ENCODE measurements at regions of chr4 and their contacts with region 1.

Region 1: DNA sequence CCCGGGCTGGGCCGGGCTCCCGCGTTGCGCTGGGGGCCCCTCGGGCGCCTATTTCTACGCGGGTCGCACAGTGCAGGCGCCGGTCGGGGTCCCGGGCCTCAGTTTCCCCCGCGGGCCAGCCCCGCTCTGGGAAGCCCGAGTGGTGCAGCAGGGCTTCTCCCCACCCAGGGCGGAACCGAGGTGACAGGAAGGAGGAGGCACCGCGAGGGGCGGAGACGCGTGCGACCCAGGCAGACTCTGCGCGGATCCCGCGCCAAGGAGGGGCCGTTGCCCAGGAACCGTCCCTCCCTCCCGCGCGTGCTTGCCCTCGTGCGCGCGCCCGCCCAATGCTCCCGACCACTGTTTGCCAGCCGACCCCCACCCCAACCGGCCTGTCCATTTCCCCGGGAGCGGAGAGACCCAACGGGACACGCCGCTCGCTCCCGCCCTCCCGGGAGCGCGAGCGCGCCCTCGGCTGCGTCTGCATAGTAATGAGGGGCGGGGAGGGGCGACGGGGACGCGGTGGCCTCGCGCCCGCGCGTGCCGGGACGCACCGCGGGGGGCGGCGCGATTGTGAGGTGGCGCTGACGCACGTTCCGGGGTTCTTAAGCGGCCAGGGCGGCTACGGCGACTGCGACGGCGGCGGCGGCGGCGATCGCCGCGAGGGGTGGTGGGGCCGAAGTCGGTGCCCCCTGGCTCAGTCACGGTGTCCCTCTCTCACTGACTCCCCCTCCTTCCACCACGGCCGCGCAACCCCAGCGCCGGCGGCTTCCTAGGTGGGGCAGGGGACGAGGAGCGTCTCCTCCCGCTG is at the start of gene CPEB2:
- DNase-seq: peak; percentile 88 to 95 (median 93)
- ATAC-seq: peak; percentile 81
- H3K4me3 ChIP-seq: peak within 1 kb of the TSS; percentile 99
- H3K4me3 Mint-ChIP-seq: peak within 1 kb of the TSS; percentile 86 to 95 (median 93)
- H3K27ac ChIP-seq: peak within 1 kb of the TSS; percentile 100
- H3K27ac Mint-ChIP-seq: peak within 1 kb of the TSS; percentile 90 to 98 (median 97)
- H3K4me1 ChIP-seq: peaks cover 7 to 10% of the 10 kb centered on the region in 2 donors
- H3K4me1 Mint-ChIP-seq: peaks cover 17 to 29% (median 24%) of the 10 kb centered on the region in 7 donors
- H3K27me3 ChIP-seq: no peaks in the 10 kb centered on the region
- H3K27me3 Mint-ChIP-seq: no peaks in the 10 kb centered on the region
- total RNA-seq, gene CPEB2: 11.1 to 21.7 (median 14.9) TPM

Region 2: DNA sequence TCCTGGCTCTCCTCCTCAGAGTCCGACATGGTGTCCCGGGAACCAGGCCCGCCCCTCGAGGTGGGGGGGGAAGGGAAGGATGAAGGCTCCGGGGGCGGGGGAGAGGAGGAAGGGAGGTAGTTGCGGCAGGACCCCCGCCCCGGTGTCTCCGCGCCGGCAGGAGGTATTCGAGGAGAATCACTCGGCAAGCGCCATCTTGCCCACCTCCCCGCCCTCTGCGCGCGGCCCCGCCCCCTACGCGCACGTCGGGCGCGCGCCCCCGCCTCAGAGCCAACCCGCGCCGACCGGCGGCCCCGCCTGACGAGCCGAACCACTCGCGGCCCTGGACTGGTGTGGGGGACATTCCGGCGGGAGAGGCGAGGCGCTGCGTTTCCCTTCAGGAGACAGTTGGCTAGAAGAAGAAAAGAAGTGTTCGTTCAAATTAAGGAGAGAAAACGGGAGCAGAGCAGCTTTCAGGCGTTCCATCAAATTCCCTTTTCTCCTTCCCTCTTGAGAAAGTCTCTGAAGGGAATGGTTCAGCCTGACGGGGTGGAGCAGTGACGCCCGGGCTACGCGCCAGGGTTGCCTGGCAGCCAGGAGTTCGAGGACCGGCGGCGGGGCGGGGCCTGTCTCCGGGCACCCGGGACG is 1517.8 kb before region 1 on chr4 and contains the start of gene RAB28:
- CTCF ChIA-PET with region 1: no interaction called
- POLR2A ChIA-PET with region 1: no interaction called
- intact Hi-C with region 1: loop called in 1 of 2 experiments (anchors 1 kb)
- DNase-seq: peak; percentile 92 to 97 (median 96)
- ATAC-seq: peak; percentile 95
- H3K4me3 ChIP-seq: peak within 1 kb of the TSS; percentile 81
- H3K4me3 Mint-ChIP-seq: peak within 1 kb of the TSS; percentile 79 to 98 (median 94)
- H3K27ac ChIP-seq: peak within 1 kb of the TSS; percentile 99
- H3K27ac Mint-ChIP-seq: peak within 1 kb of the TSS; percentile 87 to 100 (median 99)
- H3K4me1 ChIP-seq: peaks cover 15 to 18% of the 10 kb centered on the region in 2 donors
- H3K4me1 Mint-ChIP-seq: peaks cover 12 to 42% (median 28%) of the 10 kb centered on the region in 7 donors
- H3K27me3 ChIP-seq: no peaks in the 10 kb centered on the region
- H3K27me3 Mint-ChIP-seq: peaks cover 0 to 17% (median 7%) of the 10 kb centered on the region in 5 donors
- total RNA-seq, gene RAB28: 8.0 to 16.1 (median 14.0) TPM

Region 3: GRCh38 chr4:14856076-14856933 is 145.8 kb before region 1 on chr4:
- CTCF ChIA-PET with region 1: no interaction called
- POLR2A ChIA-PET with region 1: no interaction called
- intact Hi-C with region 1: loop called in 1 of 2 experiments (anchors 1 kb)
- DNase-seq: peak in 1 of 9 donors; percentile 65
- ATAC-seq: peak; percentile 89
- H3K4me3 ChIP-seq: no peak overlapping the region
- H3K4me3 Mint-ChIP-seq: no peak overlapping the region
- H3K27ac ChIP-seq: no peak overlapping the region
- H3K27ac Mint-ChIP-seq: peak overlapping the region in 1 of 9 donors; percentile 70
- H3K4me1 ChIP-seq: no peaks in the 10 kb centered on the region
- H3K4me1 Mint-ChIP-seq: peaks cover 0 to 16% (median 0%) of the 10 kb centered on the region in 7 donors
- H3K27me3 ChIP-seq: no peaks in the 10 kb centered on the region
- H3K27me3 Mint-ChIP-seq: peaks cover 0 to 40% (median 25%) of the 10 kb centered on the region in 5 donors

Region 4: DNA sequence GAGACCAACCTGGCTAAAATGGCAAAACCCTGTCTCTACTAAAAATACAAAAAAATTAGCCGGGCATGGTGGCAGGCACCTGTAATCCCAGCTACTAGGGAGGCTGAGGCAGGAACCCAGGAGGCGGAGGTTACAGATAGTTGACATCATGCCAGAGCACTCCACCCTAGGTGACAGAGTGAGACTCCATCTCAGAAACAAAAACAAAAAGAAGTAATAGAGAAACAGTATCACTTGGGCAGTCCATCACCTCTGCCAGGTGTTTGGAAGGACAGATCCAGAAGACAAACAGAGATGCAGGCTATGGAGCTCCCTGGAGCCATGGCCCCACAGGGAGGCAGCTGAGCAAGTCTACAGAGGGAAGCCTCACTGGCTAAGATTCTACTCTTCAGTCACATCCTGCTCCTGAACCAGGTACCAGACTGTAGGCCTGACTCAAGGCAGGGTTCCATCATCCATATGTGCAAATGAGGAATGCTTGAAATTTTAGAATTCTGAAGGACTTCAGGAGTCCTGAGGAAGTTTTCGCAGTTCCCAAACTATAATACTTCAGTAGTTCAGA is 81.2 kb before region 1 on chr4:
- CTCF ChIA-PET with region 1: interaction called, 3 read pairs
- POLR2A ChIA-PET with region 1: interaction called, 5 read pairs
- intact Hi-C with region 1: loop called (anchors 2 kb)
- DNase-seq: peak in 5 of 9 donors; percentile 12 to 62 (median 37)
- ATAC-seq: no peak
- H3K4me3 ChIP-seq: no peak overlapping the region
- H3K4me3 Mint-ChIP-seq: no peak overlapping the region
- H3K27ac ChIP-seq: no peak overlapping the region
- H3K27ac Mint-ChIP-seq: no peak overlapping the region
- H3K4me1 ChIP-seq: no peaks in the 10 kb centered on the region
- H3K4me1 Mint-ChIP-seq: peaks cover 0 to under 1% (median 0%) of the 10 kb centered on the region in 7 donors
- H3K27me3 ChIP-seq: no peaks in the 10 kb centered on the region
- H3K27me3 Mint-ChIP-seq: peaks cover 0 to 17% (median 11%) of the 10 kb centered on the region in 5 donors

Region 5: DNA sequence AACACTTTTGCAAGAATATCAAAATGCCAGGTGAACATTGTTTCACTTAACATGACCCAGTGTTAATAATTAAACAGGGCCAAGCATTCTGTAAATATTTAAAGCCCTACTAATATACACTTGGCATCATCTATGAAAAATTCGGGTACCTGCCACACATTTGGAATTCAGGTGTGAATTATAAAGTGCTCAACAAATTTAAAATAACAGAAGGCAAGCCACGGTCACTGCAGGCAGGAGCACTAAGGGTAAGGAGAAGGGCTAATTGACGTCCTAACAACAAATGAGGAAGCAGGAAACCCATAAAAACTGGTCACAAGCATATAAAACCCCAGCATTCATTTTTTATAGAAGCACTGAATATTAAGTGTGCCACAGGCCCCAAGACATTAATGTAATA is 43.6 kb before region 1 on chr4:
- CTCF ChIA-PET with region 1: no interaction called
- POLR2A ChIA-PET with region 1: no interaction called
- intact Hi-C with region 1: no loop called
- DNase-seq: no peak
- ATAC-seq: no peak
- H3K4me3 ChIP-seq: no peak overlapping the region
- H3K4me3 Mint-ChIP-seq: no peak overlapping the region
- H3K27ac ChIP-seq: no peak overlapping the region
- H3K27ac Mint-ChIP-seq: no peak overlapping the region
- H3K4me1 ChIP-seq: no peaks in the 10 kb centered on the region
- H3K4me1 Mint-ChIP-seq: no peaks in the 10 kb centered on the region
- H3K27me3 ChIP-seq: peaks cover 0 to 3% of the 10 kb centered on the region in 2 donors
- H3K27me3 Mint-ChIP-seq: peaks cover 0 to 7% (median 6%) of the 10 kb centered on the region in 5 donors

Region 6: DNA sequence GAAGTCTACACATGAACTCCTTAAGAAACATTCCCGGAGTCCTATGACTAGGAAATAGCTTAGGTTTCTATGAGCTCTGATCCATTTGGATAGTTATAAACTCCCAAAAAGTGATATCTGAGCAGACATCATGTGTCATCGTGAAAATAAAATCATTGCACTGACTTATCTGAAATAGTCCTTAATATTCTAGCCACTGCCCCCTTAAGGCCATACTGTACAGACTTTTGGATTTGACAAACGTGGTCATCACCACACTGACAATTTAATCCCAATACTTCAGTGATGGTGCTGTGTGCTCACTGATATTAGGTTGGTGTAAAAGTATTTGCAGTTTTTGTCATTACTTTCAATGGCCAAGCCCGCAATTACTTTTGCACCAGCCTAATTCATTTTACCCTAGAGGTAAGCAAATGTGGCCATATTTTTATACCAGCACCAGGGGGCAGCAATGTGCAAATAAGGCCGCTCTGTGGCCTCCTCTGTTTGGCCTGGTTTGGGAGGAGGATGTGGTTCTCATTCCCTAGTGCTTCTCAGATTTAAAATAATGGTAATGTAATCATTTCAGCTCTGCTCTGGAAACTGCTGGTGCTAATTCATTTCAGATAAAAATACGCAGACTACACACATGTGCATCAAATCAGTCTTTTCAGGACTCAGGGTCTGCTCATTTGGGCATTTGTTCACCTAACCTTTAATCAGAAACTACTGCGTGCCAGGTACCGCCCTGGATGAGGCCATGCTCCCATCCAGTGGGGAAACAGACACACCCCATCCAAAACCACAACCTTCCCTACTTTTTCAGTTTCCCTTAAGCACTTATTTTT is 229.4 kb after region 1 on chr4:
- CTCF ChIA-PET with region 1: no interaction called
- POLR2A ChIA-PET with region 1: no interaction called
- intact Hi-C with region 1: loop called in 1 of 2 experiments (anchors 5 kb)
- DNase-seq: peak; percentile 45 to 72 (median 69)
- ATAC-seq: peak; percentile 86
- H3K4me3 ChIP-seq: no peak overlapping the region
- H3K4me3 Mint-ChIP-seq: no peak overlapping the region
- H3K27ac ChIP-seq: no peak overlapping the region
- H3K27ac Mint-ChIP-seq: peak overlapping the region in 4 of 9 donors; percentile 11 to 68 (median 44)
- H3K4me1 ChIP-seq: peaks cover 0 to 27% of the 10 kb centered on the region in 2 donors
- H3K4me1 Mint-ChIP-seq: peaks cover 24 to 39% (median 35%) of the 10 kb centered on the region in 7 donors
- H3K27me3 ChIP-seq: no peaks in the 10 kb centered on the region
- H3K27me3 Mint-ChIP-seq: peaks cover 0 to 3% (median 0%) of the 10 kb centered on the region in 5 donors

Region 7: DNA sequence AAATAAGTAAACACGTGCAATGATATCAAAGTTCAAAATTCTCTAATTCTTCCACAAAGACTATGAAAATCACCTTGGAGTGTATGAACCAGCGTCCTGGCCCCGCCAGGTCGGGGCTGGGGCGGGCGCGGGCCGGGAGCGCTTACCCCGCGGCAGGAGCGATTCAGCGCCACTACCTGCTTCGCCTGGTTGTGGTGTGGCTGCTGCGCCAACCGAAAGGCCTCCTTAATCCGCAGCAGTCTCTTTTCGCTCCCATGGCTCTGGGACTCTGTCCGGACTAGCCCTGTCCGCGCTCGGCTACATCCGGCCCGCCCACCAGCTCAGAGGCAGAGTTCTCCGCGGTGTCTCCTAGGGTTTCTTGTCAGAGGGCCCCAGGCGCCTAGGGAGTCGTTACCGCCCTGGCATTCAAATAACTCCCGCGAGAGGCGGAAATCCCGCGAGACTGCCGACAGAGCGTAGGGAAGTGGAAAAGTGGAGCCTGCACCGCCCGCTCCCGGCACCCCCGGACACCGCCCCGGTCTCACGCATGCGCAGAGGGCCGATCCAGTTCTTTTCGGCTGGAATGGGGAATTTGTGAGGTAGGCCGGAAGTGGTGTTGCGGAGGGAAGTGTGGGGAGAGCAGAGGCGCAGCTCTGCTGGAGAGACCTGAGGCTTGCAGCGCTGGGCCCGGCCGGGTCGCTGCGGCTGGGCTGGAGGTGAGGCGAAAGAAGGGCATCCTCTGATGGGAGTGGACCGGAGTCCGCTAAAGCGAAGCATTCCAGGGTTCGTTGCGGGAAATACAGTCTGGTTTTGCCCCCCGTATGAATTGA is 679.3 kb after region 1 on chr4 and contains the start of gene FAM200B:
- CTCF ChIA-PET with region 1: no interaction called
- POLR2A ChIA-PET with region 1: interaction called, 7 read pairs
- intact Hi-C with region 1: loop called (anchors 1 kb)
- DNase-seq: peak; percentile 87 to 100 (median 93)
- ATAC-seq: peak; percentile 98
- H3K4me3 ChIP-seq: peak within 1 kb of the TSS; percentile 78
- H3K4me3 Mint-ChIP-seq: peak within 1 kb of the TSS; percentile 88 to 99 (median 94)
- H3K27ac ChIP-seq: peak within 1 kb of the TSS; percentile 94
- H3K27ac Mint-ChIP-seq: peak within 1 kb of the TSS; percentile 89 to 100 (median 98)
- H3K4me1 ChIP-seq: peaks cover 5 to 11% of the 10 kb centered on the region in 2 donors
- H3K4me1 Mint-ChIP-seq: peaks cover 22 to 54% (median 42%) of the 10 kb centered on the region in 7 donors
- H3K27me3 ChIP-seq: no peaks in the 10 kb centered on the region
- H3K27me3 Mint-ChIP-seq: no peaks in the 10 kb centered on the region
- total RNA-seq, gene FAM200B: 10.6 to 42.8 (median 27.4) TPM